ENCODE measurements at regions of chr10 and their contacts with region 1.

Region 1: GRCh38 chr10:3258394-3258793 is 85.8 kb upstream of the PITRM1 start:
- DNase-seq: no peak
- H3K4me3 ChIP-seq: no peak overlapping the region
- H3K27ac ChIP-seq: no peak overlapping the region
- H3K4me1 ChIP-seq: no peaks in the 10 kb centered on the region
- H3K27me3 ChIP-seq: no peaks in the 10 kb centered on the region
- CTCF ChIP-seq: no peak
- POLR2A ChIP-seq: no peak

Region 2: DNA sequence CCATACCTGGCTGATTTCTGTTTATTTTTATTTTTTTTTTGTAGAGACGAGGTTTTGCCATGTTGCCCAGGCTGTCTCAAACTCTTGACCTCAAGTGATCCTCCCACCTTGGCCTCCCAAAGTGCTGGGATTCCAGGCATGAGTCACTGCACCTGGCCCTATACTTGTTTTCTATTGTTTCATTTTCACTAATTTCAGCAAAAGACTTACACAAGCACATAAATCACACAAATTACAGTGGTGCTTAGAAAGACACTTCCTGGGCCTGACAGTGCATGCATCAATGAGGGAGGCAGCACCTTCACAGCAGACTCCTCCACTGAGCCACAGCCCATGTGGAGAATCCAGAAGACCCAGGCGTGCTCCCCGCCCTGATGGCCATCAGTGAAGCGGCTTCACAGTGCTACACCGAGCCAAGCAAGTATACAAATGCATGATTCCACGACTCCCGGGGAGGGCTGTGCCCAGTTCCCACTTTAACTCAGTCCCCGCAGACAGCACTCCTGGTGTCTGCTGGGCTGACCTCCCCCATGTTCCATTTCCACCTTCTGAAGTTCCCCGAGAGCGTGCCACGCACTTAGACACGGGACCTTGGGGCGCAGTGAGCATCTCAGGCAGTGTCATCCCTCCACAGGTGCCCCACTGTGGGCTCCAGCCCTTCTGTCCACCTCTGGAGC is 106.4 kb before region 1 on chr10:
- intact Hi-C with region 1: no loop called
- DNase-seq: no peak
- H3K4me3 ChIP-seq: no peak overlapping the region
- H3K27ac ChIP-seq: no peak overlapping the region
- H3K4me1 ChIP-seq: no peaks in the 10 kb centered on the region
- H3K27me3 ChIP-seq: no peaks in the 10 kb centered on the region
- CTCF ChIP-seq: no peak
- POLR2A ChIP-seq: no peak

Region 3: GRCh38 chr10:3482200-3483138 is 224.1 kb after region 1 on chr10:
- intact Hi-C with region 1: loop called (anchors 10 kb)
- DNase-seq: peak; percentile 91
- H3K4me3 ChIP-seq: no peak overlapping the region
- H3K27ac ChIP-seq: peak overlapping the region; percentile 74 to 76
- H3K4me1 ChIP-seq: no peaks in the 10 kb centered on the region
- H3K27me3 ChIP-seq: no peaks in the 10 kb centered on the region
- CTCF ChIP-seq: no peak
- POLR2A ChIP-seq: no peak

Measured in prostate gland (tissue), 2 donors.